ENCODE measurements at regions of chr19 and their contacts with region 1.

Region 1: DNA sequence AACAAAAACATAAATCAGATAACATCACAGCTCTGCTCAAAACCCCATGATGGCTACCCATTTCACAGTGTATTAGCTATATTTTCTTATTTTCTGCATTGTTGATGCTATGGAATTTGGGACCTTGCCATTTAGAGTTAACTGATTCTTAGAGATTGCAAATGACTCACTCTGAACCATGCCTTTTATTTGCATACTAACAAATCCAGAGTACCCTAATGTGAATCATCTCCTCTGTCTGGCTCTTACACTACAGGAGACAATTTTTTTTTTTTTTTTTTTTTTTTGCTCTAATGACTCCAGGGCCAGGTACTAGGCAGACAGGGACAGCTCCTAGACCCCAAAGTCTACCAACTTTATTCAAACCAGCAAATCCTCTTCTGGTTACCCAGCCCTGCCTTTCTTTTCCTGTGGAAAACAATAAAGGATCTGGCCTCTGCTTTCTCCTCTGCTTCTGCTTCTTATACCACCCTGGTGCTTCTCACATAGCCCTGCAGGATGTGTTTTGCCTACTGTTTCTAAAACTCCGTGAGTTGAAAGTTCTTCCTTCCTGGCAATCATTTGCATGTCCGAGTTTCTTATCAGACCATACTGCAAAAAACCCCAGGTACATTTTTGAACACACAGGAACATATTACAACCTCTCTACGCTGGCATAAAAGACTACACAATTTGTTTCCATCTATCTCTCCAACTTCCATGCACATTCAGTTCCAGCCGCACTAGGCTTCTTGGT is 10.6 kb upstream of the ZNF460 start:
- DNase-seq: no peak
- ATAC-seq: peak; percentile 66
- H3K4me3 Mint-ChIP-seq: peak overlapping the region; percentile 72
- H3K27ac Mint-ChIP-seq: peak overlapping the region; percentile 95
- H3K4me1 Mint-ChIP-seq: peaks cover 65% of the 10 kb centered on the region
- H3K27me3 Mint-ChIP-seq: no peaks in the 10 kb centered on the region
- CTCF ChIP-seq: no peak

Region 2: DNA sequence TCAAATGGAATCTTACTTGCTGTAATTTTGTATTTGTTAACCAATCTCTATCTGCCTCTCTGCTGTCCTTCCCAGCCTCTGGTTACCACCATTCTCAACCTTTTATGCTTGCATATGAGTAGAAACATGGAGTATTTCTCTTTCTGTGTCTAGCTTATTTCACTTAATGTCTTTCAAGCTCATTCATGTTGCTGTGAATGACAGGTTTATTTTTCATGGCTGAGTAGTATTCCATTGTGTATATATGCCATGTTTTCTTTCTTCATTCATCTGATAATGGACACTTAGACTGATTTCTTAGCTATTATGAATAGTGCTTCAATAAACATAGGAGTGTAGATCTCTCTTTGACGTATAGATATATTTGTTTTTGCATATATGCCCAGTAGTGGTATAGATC is 24.0 kb after region 1 on chr19:
- CTCF ChIA-PET with region 1: no interaction called
- POLR2A ChIA-PET with region 1: interaction called, 10 read pairs
- intact Hi-C with region 1: no loop called
- DNase-seq: no peak
- ATAC-seq: no peak
- H3K4me3 Mint-ChIP-seq: no peak overlapping the region
- H3K27ac Mint-ChIP-seq: no peak overlapping the region
- H3K4me1 Mint-ChIP-seq: peaks cover 11% of the 10 kb centered on the region
- H3K27me3 Mint-ChIP-seq: no peaks in the 10 kb centered on the region
- CTCF ChIP-seq: no peak